ENCODE measurements at regions of chr1 and their contacts with region 1.

Region 1: GRCh38 chr1:28518000-28518744 is 12.3 kb downstream of the RCC1 start:
- DNase-seq: peak; percentile 92 to 94
- ATAC-seq: peak; percentile 84 to 90 (median 88)
- H3K4me3 ChIP-seq: peak overlapping the region; percentile 85
- H3K27ac ChIP-seq: peak overlapping the region; percentile 91
- H3K4me1 ChIP-seq: peaks cover 14% of the 10 kb centered on the region
- H3K27me3 ChIP-seq: no peaks in the 10 kb centered on the region
- CTCF ChIP-seq: peak; percentile 99

Region 2: GRCh38 chr1:26889551-26890466 is 1628.4 kb before region 1 on chr1 and contains the start of gene GPN2:
- intact Hi-C with region 1: no loop called
- DNase-seq: peak; percentile 78 to 88
- ATAC-seq: peak; percentile 91 to 96 (median 94)
- H3K4me3 ChIP-seq: peak within 1 kb of the TSS; percentile 96
- H3K27ac ChIP-seq: peak within 1 kb of the TSS; percentile 94
- H3K4me1 ChIP-seq: peaks cover 14% of the 10 kb centered on the region
- H3K27me3 ChIP-seq: no peaks in the 10 kb centered on the region
- CTCF ChIP-seq: no peak
- total RNA-seq, gene GPN2: 18.3 to 35.9 (median 25.6) TPM

Region 3: GRCh38 chr1:28552758-28553663 is 34.8 kb after region 1 on chr1 and contains the start of gene TRNAU1AP:
- intact Hi-C with region 1: loop called in 1 of 2 experiments (anchors 1 kb)
- DNase-seq: peak; percentile 95 to 98
- ATAC-seq: peak; percentile 98
- H3K4me3 ChIP-seq: peak within 1 kb of the TSS; percentile 86
- H3K27ac ChIP-seq: peak within 1 kb of the TSS; percentile 88
- H3K4me1 ChIP-seq: peaks cover 7% of the 10 kb centered on the region
- H3K27me3 ChIP-seq: no peaks in the 10 kb centered on the region
- CTCF ChIP-seq: no peak
- total RNA-seq, gene TRNAU1AP: 7.5 to 17.5 (median 12.2) TPM

Region 4: DNA sequence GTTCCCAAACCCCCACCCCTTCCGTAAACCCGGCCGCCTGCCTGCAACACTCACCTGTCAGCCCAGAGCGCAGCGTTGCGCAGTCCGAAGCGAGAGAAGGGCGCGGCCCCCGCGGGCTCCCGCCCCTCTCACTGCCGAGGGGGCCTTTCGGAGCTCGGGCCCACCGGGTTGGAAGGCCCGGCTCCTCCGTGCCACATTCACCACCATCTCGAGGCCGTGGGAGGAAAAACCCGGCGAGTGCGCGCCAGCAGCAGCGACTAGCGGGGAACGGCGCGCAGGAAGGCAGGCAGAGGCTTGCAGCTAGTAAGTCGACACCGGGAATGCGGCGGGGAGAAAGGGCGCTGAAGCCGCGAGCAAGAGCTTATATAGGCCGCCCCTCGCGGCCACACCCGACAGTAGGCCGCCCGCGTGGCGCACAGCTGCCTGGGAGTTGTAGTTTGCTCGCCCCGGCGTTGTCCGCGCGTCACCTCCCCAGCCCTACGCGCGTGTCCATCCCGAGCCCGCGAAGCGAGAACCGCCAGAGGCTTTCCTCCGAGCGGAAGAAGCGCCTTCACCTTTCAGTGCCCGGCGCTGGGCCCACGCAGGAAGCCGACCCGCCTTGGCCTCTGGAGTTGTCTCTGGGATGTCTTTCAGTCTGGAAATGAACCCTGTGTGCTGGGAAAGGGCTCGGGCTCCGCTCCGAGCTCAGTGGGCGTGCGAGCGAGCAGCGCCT is 63.5 kb after region 1 on chr1:
- intact Hi-C with region 1: loop called in 1 of 2 experiments (anchors 2 kb)
- DNase-seq: peak; percentile 96 to 98
- ATAC-seq: peak; percentile 96 to 97 (median 97)
- H3K4me3 ChIP-seq: peak overlapping the region; percentile 85
- H3K27ac ChIP-seq: peak overlapping the region; percentile 90
- H3K4me1 ChIP-seq: peaks cover 18% of the 10 kb centered on the region
- H3K27me3 ChIP-seq: no peaks in the 10 kb centered on the region
- CTCF ChIP-seq: no peak

Region 5: DNA sequence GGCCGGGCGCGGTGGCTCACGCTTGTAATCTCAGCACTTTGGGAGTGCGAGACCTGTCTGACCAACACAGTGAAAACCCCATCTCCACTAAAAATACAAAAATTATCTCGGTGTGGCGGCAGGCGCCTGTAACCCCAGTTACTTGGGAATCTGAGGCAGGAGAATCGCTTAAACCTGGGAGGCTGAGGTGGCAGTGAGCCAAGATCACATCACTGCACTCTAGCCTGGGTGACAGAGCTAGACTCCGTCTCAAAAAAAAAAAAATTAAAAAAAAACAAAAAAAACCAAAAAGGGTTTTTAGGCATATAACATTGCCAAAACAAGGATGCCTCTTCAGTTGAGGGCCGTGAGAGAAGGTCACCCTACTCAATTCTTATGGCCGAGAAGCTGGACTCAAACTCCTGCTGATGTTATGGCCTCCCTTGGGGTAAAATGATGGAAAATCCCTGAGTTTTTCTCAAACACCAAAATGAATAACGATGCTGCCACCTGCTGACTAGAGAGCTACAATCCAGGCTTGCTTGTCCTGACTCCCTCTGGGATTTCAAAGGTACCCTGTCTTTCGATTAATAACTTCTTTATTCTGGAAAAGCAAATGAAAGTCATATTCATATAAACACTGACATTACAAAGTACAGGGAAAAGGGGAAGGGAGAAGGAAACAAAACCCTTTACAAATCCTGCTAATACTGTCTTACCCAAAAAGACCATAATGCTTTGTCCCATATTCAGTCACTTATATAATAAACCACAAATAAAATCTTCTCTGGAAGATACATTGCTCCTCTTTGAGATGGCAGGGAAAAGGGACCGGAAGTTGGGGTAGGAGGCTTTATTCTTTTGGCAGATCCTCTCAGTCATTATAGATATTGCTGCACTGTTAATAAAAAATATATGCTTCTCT is 84.6 kb after region 1 on chr1:
- intact Hi-C with region 1: loop called (anchors 1 to 5 kb)
- DNase-seq: no peak
- ATAC-seq: peak in 1 of 4 donors; percentile 75
- H3K4me3 ChIP-seq: no peak overlapping the region
- H3K27ac ChIP-seq: no peak overlapping the region
- H3K4me1 ChIP-seq: peaks cover 13% of the 10 kb centered on the region
- H3K27me3 ChIP-seq: no peaks in the 10 kb centered on the region
- CTCF ChIP-seq: peak; percentile 57

Region 6: DNA sequence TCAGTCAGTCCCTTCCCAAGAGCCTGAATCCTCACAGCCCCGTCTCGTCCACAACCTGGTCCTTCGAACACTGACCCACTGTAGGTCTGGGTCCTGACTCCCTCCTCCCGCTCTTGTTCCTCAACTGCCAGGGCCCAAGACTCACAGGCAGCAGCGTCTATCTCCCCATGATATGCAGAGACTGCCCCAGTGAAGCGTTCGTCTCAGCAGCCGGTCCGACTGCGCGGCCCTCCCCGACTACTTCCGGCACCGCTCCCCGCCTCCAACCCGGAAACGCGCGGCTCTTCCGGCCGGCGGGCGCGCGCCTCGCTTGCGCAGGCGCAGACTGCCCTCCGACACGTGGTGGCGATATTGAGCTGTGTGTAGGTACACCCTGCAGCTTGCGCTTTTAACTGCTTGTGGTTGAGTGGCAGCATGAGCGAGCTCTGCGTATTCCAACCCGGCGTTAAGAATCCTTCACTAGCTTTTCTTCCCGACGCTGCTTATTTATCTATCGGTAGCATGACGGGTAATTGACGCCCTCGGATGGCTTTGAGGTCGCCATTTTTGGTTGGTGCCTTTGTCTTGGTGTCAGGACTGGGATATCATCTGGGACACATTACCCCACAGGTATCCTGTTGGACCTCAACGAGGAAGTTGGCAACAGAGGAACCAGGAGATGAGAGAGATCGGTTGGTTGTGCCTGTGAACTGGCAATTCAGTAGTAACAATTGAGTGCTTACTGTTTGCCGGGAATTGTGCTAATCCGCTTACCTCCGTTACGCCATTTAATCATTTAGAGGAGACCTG is 124.9 kb after region 1 on chr1 and contains the start of gene TAF12:
- intact Hi-C with region 1: loop called in 1 of 2 experiments (anchors 5 kb)
- DNase-seq: peak; percentile 89 to 96
- ATAC-seq: peak; percentile 92 to 95 (median 94)
- H3K4me3 ChIP-seq: peak within 1 kb of the TSS; percentile 86
- H3K27ac ChIP-seq: peak within 1 kb of the TSS; percentile 93
- H3K4me1 ChIP-seq: peaks cover 41% of the 10 kb centered on the region
- H3K27me3 ChIP-seq: no peaks in the 10 kb centered on the region
- CTCF ChIP-seq: peak; percentile 22
- total RNA-seq, gene TAF12: 24.4 to 30.3 (median 27.3) TPM

Region 7: DNA sequence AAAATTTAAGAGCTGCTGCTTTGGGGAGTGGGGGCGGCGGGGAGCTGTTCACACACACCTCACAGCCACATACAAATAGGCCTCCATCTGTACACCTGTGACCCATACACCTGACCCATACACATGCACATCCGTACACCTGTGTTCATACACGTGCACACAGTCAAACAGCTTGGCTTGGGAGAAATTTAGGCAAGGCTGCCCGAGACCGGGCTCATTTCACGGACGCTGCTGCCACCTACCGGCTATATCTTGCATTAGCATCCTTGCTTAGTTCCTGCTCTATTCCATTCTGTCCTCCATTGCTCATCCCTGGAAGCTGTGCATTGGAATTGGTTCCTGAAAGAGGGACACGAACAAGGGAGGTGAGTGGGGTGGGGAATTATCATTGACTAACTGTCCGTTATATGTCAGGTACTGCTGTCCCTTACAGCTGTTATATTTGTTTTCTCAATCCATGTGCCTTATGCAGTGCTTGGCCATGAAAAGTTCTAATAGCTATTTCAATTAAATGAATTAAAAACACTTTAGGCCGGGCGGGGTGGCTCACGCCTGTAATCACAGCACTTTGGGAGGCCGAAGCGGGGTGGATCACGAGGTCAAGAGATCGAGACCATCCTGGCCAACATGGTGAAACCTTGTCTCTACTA is 359.1 kb after region 1 on chr1:
- intact Hi-C with region 1: loop called (anchors 5 kb)
- DNase-seq: peak; percentile 67 to 85
- ATAC-seq: peak; percentile 83 to 88 (median 84)
- H3K4me3 ChIP-seq: no peak overlapping the region
- H3K27ac ChIP-seq: no peak overlapping the region
- H3K4me1 ChIP-seq: peaks cover 1% of the 10 kb centered on the region
- H3K27me3 ChIP-seq: no peaks in the 10 kb centered on the region
- CTCF ChIP-seq: peak; percentile 96

Region 8: GRCh38 chr1:29120961-29121485 is 602.9 kb after region 1 on chr1:
- intact Hi-C with region 1: no loop called
- DNase-seq: peak; percentile 50 to 66
- ATAC-seq: peak; percentile 25 to 39 (median 28)
- H3K4me3 ChIP-seq: peak overlapping the region; percentile 77
- H3K27ac ChIP-seq: no peak overlapping the region
- H3K4me1 ChIP-seq: peaks cover 6% of the 10 kb centered on the region
- H3K27me3 ChIP-seq: peaks cover 0 to 50% (median 16%) of the 10 kb centered on the region in 3 donors
- CTCF ChIP-seq: peak; percentile 29